ENCODE measurements at regions of chr7 and their contacts with region 1.

Region 1: DNA sequence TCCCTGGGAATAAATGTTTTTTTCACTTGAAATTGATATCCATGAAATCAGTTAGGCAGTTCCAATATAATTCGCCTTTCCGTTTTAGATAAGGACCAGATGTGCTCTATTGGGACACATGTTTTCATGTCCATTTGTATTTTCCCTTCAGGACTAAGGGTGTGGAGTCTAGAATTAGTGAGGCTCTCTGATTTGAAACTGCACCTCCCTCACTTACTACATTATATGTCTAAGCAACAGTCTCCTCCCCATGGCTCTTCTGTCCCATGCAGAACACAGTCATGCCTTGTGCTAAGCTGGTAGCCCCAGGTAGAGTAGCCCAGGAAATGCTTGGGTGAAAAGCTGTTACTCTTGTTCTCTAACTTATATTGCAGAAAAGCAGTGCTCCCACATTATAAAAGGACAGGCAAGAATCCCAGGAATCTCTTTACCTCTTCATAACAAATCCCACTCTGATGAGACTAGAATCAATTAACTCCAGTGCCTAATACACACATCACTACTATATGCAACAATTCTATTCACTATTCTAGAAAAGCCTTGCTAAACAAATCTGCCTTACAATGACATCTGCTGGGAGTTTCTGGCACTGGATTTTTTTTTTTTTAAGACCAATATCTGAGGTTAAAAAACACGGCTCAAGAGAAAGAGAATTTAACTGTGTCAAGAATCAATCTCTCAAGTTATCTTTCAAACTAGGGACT is 293.9 kb downstream of the SNX13 start:
- DNase-seq: peak; percentile 26
- H3K4me3 Mint-ChIP-seq: no peak overlapping the region
- H3K27ac Mint-ChIP-seq: no peak overlapping the region
- H3K4me1 Mint-ChIP-seq: peaks cover 10% of the 10 kb centered on the region
- H3K27me3 Mint-ChIP-seq: no peaks in the 10 kb centered on the region
- CTCF ChIP-seq: peak; percentile 10

Region 2: DNA sequence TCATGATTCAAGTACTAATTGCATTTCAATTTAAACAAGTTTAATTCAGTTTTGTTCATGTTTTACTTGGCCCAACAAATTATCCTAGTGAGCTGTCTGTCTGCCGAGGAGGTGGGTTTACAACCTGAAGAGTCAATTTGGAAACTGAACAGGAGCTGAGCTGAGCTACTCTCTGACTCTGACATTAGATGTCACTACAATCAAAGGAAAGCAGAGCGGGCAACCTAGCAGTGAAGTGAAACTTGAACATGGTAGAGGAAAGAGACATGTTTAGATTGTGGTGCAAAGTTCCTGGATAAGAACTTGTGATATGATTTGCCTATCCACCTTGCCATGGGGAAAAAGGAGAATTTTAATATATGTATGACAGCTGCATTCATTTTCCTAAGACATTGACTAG is 755.1 kb before region 1 on chr7:
- CTCF ChIA-PET with region 1: interaction called, 4 read pairs
- intact Hi-C with region 1: loop called (anchors 5 kb)
- DNase-seq: peak; percentile 76
- H3K4me3 Mint-ChIP-seq: no peak overlapping the region
- H3K27ac Mint-ChIP-seq: no peak overlapping the region
- H3K4me1 Mint-ChIP-seq: peaks cover 48% of the 10 kb centered on the region
- H3K27me3 Mint-ChIP-seq: no peaks in the 10 kb centered on the region
- CTCF ChIP-seq: peak; percentile 68

Region 3: DNA sequence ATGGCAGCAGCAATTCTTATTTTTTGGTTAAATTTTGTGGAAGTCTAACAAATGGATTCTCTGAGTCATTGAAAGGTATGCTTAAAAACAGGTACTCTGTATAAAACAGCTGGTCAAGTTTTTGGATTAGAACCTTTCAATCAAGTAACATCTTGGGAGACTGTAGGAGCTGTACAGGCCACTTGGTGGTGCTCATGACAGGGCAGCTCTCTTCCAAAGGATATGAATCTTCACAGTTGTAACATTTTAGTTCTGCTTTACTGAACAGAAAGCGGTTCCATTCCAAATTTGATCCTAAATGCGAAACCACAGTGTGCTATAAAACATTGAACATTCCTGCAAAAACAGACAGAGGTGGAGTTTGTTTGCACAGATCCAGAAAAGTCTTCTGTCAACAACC is 720.1 kb before region 1 on chr7:
- CTCF ChIA-PET with region 1: no interaction called
- intact Hi-C with region 1: loop called (anchors 5 kb)
- DNase-seq: peak; percentile 57
- H3K4me3 Mint-ChIP-seq: no peak overlapping the region
- H3K27ac Mint-ChIP-seq: peak overlapping the region; percentile 48
- H3K4me1 Mint-ChIP-seq: peaks cover 78% of the 10 kb centered on the region
- H3K27me3 Mint-ChIP-seq: no peaks in the 10 kb centered on the region
- CTCF ChIP-seq: peak; percentile 72

Region 4: GRCh38 chr7:17304926-17305325 is 341.5 kb before region 1 on chr7:
- CTCF ChIA-PET with region 1: interaction called, 3 read pairs
- intact Hi-C with region 1: loop called (anchors 2 kb)
- DNase-seq: peak; percentile 71
- H3K4me3 Mint-ChIP-seq: no peak overlapping the region
- H3K27ac Mint-ChIP-seq: no peak overlapping the region
- H3K4me1 Mint-ChIP-seq: no peaks in the 10 kb centered on the region
- H3K27me3 Mint-ChIP-seq: no peaks in the 10 kb centered on the region
- CTCF ChIP-seq: no peak

Region 5: GRCh38 chr7:17370092-17370491 is 276.3 kb before region 1 on chr7:
- CTCF ChIA-PET with region 1: interaction called, 9 read pairs
- intact Hi-C with region 1: loop called (anchors 5 kb)
- DNase-seq: peak; percentile 69
- H3K4me3 Mint-ChIP-seq: peak overlapping the region; percentile 22
- H3K27ac Mint-ChIP-seq: peak overlapping the region; percentile 92
- H3K4me1 Mint-ChIP-seq: peaks cover 71% of the 10 kb centered on the region
- H3K27me3 Mint-ChIP-seq: no peaks in the 10 kb centered on the region
- CTCF ChIP-seq: no peak

Region 6: GRCh38 chr7:17530741-17531417 is 115.5 kb before region 1 on chr7:
- CTCF ChIA-PET with region 1: interaction called, 3 read pairs
- intact Hi-C with region 1: loop called (anchors 2 kb)
- DNase-seq: no peak
- H3K4me3 Mint-ChIP-seq: no peak overlapping the region
- H3K27ac Mint-ChIP-seq: peak overlapping the region; percentile 86
- H3K4me1 Mint-ChIP-seq: peaks cover 66% of the 10 kb centered on the region
- H3K27me3 Mint-ChIP-seq: no peaks in the 10 kb centered on the region
- CTCF ChIP-seq: peak; percentile 41

Region 7: GRCh38 chr7:17559388-17559787 is 87.0 kb before region 1 on chr7:
- CTCF ChIA-PET with region 1: interaction called, 3 read pairs
- intact Hi-C with region 1: loop called (anchors 2 kb)
- DNase-seq: no peak
- H3K4me3 Mint-ChIP-seq: peak overlapping the region; percentile 62
- H3K27ac Mint-ChIP-seq: peak overlapping the region; percentile 93
- H3K4me1 Mint-ChIP-seq: peaks cover 67% of the 10 kb centered on the region
- H3K27me3 Mint-ChIP-seq: no peaks in the 10 kb centered on the region
- CTCF ChIP-seq: no peak

Region 8: DNA sequence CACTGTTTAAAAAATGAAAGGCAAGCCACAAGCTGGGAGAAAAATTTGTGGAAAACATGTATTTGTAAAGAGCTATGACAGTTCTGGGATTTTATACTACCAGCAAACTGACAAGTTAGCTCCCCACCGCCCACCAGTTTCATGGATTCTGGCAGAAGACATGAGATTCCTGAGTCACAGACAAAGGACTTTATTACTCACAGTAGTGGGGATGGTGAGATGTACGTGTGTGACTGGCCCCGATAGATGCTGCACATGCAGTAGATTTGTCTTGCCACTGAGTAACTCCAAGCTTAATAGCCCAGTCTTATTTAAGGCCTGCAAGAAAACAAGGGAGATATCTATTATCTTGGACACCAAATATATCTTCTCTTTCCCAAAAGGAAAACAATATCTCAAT is 66.3 kb before region 1 on chr7:
- CTCF ChIA-PET with region 1: no interaction called
- intact Hi-C with region 1: no loop called
- DNase-seq: no peak
- H3K4me3 Mint-ChIP-seq: no peak overlapping the region
- H3K27ac Mint-ChIP-seq: no peak overlapping the region
- H3K4me1 Mint-ChIP-seq: no peaks in the 10 kb centered on the region
- H3K27me3 Mint-ChIP-seq: no peaks in the 10 kb centered on the region
- CTCF ChIP-seq: no peak

Region 9: GRCh38 chr7:17774248-17774647 is 127.8 kb after region 1 on chr7:
- CTCF ChIA-PET with region 1: no interaction called
- intact Hi-C with region 1: no loop called
- DNase-seq: no peak
- H3K4me3 Mint-ChIP-seq: no peak overlapping the region
- H3K27ac Mint-ChIP-seq: peak overlapping the region; percentile 1
- H3K4me1 Mint-ChIP-seq: peaks cover 33% of the 10 kb centered on the region
- H3K27me3 Mint-ChIP-seq: no peaks in the 10 kb centered on the region
- CTCF ChIP-seq: no peak